Tibial artery (tissue), 4 donors: ENCODE measurements at regions of chr17 and their contacts with region 1.

Region 1: DNA sequence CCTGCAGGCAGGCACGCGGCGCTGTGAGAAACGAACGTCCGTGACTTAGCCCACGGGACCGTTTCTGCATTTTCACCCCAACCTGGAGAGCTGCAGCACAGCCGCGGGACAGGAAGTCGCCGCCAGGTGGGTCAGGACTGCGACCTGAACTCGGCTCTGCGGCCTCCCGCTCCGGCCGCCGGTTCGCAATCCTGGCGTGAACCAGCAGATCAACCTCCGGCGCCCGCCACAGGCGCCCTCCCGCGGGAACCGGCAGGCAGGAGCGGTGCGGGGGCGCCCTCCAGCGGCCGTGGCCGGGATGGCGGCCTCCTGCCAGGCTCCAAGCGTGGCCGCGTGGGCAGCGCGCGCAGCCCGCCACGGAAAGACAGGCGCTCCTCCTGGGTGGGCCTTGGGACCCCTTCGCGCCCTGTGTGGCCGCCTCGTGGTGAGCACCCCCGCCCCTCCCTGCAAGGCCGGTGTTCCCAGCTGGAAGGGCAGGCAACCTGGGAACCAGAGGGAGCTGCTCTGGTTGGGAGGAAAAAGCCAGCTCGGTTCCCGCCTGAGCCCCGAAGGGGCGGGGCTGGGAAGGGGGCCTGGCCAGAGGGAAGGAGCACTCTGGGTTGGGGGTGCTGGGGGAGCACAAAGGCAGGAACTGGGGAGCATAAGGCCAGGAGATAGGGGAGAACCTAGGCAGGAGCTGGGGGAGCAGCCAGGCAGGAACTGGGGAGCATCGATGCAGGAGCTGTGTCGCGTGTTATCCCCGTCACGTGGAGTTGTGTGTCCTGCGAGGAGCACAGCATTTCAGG is 28.2 kb downstream of the ACTG1 start:
- DNase-seq: peak; percentile 82 to 91
- H3K4me3 ChIP-seq: peak overlapping the region; percentile 40 to 51
- H3K27ac ChIP-seq: no peak overlapping the region
- H3K4me1 ChIP-seq: peaks cover 0 to 59% (median 52%) of the 10 kb centered on the region in 4 donors
- H3K27me3 ChIP-seq: peaks cover 0 to 11% of the 10 kb centered on the region in 2 donors
- CTCF ChIP-seq: peak; percentile 97 to 99

Region 2: DNA sequence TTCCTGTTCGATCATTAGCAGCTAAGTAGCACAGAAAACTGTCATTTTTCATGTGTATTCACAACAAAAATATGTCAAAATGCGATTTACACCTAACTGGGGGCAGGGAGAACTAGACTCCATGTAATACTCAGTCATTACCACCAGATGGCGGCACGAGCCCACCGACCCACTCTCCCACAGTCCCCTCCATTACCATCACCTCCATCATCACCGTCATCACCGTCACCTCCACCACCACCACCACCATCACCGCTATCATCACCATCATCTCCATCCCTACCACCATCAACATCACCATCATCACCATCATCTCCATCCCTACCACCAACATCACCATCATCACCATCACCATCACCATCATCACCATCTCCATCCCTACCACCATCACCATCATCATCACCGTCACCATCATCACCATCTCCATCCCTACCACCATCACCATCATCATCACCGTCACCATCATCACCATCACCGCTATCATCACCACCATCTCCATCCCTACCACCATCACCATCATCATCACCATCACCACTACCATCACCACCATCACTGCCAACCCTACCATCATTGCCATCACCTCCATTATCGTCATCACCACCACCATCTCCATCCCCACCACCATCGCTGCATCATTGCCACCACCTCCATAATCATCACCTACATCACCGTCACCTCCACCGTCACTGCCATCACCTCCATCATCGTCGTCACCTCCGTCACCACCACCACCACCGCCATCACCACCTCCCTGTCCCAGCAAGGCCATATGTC is 230.8 kb before region 1 on chr17:
- intact Hi-C with region 1: loop called (anchors 5 kb)
- DNase-seq: no peak
- H3K4me3 ChIP-seq: no peak overlapping the region
- H3K27ac ChIP-seq: no peak overlapping the region
- H3K4me1 ChIP-seq: peaks cover 0 to 16% (median 13%) of the 10 kb centered on the region in 4 donors
- H3K27me3 ChIP-seq: no peaks in the 10 kb centered on the region
- CTCF ChIP-seq: peak; percentile 82 to 92

Region 3: GRCh38 chr17:81294856-81295680 is 189.3 kb before region 1 on chr17 and contains the start of gene SLC38A10:
- intact Hi-C with region 1: loop called (anchors 5 kb)
- DNase-seq: peak; percentile 91 to 94
- H3K4me3 ChIP-seq: peak within 1 kb of the TSS; percentile 93 to 97
- H3K27ac ChIP-seq: peak within 1 kb of the TSS; percentile 92 to 96
- H3K4me1 ChIP-seq: peaks cover 0 to 44% (median 31%) of the 10 kb centered on the region in 4 donors
- H3K27me3 ChIP-seq: no peaks in the 10 kb centered on the region
- CTCF ChIP-seq: peak in 1 of 2 experiments; percentile 6

Region 4: GRCh38 chr17:81394921-81395599 is 89.3 kb before region 1 on chr17 and contains the start of gene BAHCC1:
- intact Hi-C with region 1: loop called (anchors 5 kb)
- DNase-seq: peak; percentile 100
- H3K4me3 ChIP-seq: peak within 1 kb of the TSS; percentile 86 to 92
- H3K27ac ChIP-seq: peak within 1 kb of the TSS; percentile 97 to 99
- H3K4me1 ChIP-seq: peaks cover 7 to 39% (median 33%) of the 10 kb centered on the region in 4 donors
- H3K27me3 ChIP-seq: no peaks in the 10 kb centered on the region
- CTCF ChIP-seq: no peak

Region 5: GRCh38 chr17:81405411-81405872 is 78.9 kb before region 1 on chr17:
- intact Hi-C with region 1: no loop called
- DNase-seq: peak; percentile 87 to 97
- H3K4me3 ChIP-seq: peak overlapping the region in 1 of 2 donors; percentile 51
- H3K27ac ChIP-seq: peak overlapping the region; percentile 95 to 99
- H3K4me1 ChIP-seq: peaks cover 5 to 74% (median 60%) of the 10 kb centered on the region in 4 donors
- H3K27me3 ChIP-seq: no peaks in the 10 kb centered on the region
- CTCF ChIP-seq: no peak